Activated CD4-positive, alpha-beta T cell treated with anti-CD3 and anti-CD28 coated beads, Interleukin-2, amount 10 ng/mL, durations not matched to agents 24 days and 14 days (primary cell): ENCODE measurements at regions of chr16 and their contacts with region 1.

Region 1: DNA sequence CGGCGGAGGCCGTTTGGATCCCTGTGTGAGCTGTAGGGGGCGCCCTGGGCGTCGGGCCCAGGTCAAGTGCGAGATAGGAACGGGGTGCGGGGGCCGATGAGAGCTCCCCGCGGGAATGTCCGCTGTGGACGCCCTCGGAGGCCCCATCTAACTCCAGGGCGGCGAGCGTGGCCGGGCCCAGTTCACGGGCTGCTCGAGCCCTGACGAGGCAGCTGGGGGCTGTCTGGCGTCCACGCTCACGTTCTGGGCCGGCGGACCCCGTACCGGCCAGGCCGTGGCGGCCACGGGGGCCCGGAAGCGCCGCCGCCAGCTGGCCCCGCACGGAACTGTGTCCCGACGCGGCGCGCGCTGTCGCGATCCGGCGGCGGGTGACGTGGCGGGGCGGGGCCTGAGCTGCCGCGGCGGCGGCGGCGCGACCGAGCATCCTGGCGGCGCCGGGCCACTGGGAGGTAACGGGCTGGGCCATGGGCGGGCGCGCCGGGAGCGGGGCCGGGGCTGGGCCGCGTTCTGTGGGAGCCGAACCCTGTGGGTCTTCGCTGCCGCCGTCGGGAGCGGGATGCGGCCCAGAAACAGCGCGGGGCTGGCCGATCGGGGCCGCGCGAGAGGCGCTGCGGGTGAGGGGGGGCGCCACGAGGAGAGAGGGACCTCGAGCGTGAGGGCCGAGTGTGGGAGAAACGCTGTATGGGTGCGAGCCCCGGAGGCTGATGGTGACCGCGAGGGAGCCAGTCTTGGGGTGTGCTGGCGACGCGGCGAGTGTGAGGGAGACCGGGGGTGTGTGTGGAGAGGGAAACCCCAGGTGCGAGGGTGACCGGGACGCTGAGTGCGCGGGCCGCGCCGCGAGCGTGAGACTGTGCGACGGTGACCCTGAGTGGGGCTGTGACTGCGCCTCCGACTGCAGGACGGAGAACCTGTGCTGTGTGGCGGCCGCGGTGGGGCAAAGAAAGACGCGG is at the start of gene SLC7A6:
- DNase-seq: peak; percentile 96
- H3K4me3 Mint-ChIP-seq: peak within 1 kb of the TSS; percentile 98
- H3K27ac Mint-ChIP-seq: peak within 1 kb of the TSS; percentile 99
- H3K4me1 Mint-ChIP-seq: peaks cover 45% of the 10 kb centered on the region
- H3K27me3 Mint-ChIP-seq: no peaks in the 10 kb centered on the region
- total RNA-seq, gene SLC7A6: 103 and 106 TPM in 2 replicates

Region 2: GRCh38 chr16:68275611-68276191 is 11.3 kb after region 1 on chr16:
- intact Hi-C with region 1: loop called (anchors 1 kb)
- DNase-seq: peak; percentile 85
- H3K4me3 Mint-ChIP-seq: peak overlapping the region; percentile 73
- H3K27ac Mint-ChIP-seq: peak overlapping the region; percentile 83
- H3K4me1 Mint-ChIP-seq: peaks cover 64% of the 10 kb centered on the region
- H3K27me3 Mint-ChIP-seq: no peaks in the 10 kb centered on the region

Region 3: DNA sequence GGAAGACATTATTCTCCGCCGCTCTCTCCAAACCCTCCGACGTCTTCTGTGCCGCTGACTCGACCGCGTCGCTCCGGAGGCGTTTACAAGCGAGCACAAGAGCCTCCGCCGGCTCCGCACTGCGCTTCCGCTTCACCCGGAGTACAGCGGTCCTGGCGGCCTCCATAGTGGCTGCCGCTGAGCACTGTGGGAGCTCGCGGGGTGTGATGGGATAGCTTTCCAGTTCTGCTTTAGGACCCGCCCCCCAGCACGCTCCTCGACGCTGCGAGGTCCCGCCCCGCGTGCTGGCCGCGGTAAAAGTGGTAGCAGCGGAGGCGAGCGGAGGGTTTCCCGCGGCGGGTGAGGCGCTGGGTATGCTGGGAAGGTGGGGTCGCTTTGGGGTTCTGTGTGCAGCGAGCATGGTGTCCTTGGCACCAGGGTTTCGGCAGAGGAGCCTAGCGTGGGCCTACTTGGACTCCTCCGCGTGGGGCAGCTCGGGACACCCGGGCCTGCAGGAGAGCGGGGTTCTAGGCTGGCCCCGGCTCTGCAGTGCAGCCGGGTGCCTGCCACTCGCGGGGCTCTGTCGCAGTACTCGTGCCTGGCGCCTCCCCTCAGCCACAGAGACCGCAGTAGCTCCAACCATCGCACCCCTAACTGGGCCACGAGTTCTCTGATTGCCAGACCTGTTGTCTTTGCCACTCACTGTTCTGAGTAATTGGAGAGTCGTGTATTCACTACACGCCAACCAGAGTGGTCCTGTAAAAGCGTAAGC is 46.5 kb after region 1 on chr16 and contains the starts of genes PRMT7 and SLC7A6OS:
- intact Hi-C with region 1: loop called (anchors 1 kb)
- DNase-seq: peak; percentile 98
- H3K4me3 Mint-ChIP-seq: peak within 1 kb of the TSS; percentile 89
- H3K27ac Mint-ChIP-seq: peak within 1 kb of the TSS; percentile 86
- H3K4me1 Mint-ChIP-seq: peaks cover 37% of the 10 kb centered on the region
- H3K27me3 Mint-ChIP-seq: no peaks in the 10 kb centered on the region
- total RNA-seq, gene PRMT7: 69.7 and 72.2 TPM in 2 replicates
- total RNA-seq, gene SLC7A6OS: 22.3 and 27.1 TPM in 2 replicates

Region 4: GRCh38 chr16:68328151-68328859 is 63.9 kb after region 1 on chr16:
- intact Hi-C with region 1: loop called (anchors 1 kb)
- DNase-seq: peak; percentile 94
- H3K4me3 Mint-ChIP-seq: no peak overlapping the region
- H3K27ac Mint-ChIP-seq: no peak overlapping the region
- H3K4me1 Mint-ChIP-seq: peaks cover 30% of the 10 kb centered on the region
- H3K27me3 Mint-ChIP-seq: no peaks in the 10 kb centered on the region

Region 5: DNA sequence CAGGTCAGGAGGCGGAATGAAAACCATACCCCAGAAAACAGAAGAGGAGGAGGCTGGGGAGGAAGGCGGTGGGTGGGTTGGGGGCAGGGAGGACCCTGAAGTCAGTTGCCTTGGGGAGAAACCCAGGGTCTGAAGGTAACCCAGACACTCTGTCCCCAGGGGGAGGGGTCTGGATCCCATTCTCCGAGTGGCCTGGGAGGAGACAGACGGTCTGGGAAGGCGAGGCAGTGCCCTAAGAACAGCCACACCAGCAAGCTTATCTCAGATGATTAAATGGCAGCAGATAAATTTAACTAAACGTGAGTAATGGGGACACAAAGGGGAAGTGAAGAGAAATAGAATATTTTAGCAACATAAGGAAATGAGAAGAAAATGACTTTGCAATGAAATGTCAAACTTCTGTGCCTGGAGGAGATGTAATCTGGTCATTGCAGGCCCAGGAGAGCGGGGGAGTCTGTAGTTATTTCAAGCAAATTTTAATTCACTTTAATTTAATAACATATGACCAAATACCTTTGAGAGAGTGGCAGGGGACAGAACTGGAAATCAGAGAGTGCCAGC is 253.3 kb after region 1 on chr16:
- intact Hi-C with region 1: loop called (anchors 10 kb)
- DNase-seq: no peak
- H3K4me3 Mint-ChIP-seq: no peak overlapping the region
- H3K27ac Mint-ChIP-seq: no peak overlapping the region
- H3K4me1 Mint-ChIP-seq: peaks cover 6% of the 10 kb centered on the region
- H3K27me3 Mint-ChIP-seq: peaks cover 14% of the 10 kb centered on the region